ENCODE measurements at regions of chr2 and their contacts with region 1.

Region 1: DNA sequence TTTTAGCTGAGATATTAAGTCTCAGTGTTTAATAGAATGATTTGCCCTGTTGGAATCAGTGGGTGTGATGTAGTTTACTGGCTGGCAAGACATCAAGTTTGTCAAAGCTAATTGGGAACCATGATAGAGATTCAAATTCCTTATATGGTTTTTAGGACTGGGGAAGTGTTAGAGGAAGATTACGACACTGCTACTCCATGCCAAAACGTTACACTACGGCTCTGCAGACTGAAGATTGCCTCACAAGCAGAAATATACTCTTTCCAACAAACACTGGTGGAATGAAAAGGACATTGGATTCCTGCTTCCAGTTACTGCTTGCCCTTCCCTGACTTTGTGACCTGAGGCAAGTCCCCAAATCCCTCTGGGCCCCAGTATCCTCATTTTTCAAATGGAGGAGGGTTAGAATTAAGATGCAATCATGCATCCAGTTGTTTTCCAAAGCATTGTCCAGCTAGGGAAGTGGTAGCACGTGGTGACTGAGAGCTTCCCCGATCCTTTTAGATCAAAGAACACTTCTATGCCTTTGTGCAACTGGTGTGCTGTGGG is 147.6 kb downstream of the CDC42EP3 start:
- DNase-seq: peak in 1 of 2 donors; percentile 72
- ATAC-seq: peak; percentile 93 to 98 (median 97)
- H3K4me3 ChIP-seq: peak overlapping the region in 1 of 10 donors; percentile 4
- H3K27ac ChIP-seq: peak overlapping the region in 9 of 10 donors; percentile 3 to 85 (median 78)
- H3K4me1 ChIP-seq: peaks cover 4 to 39% (median 22%) of the 10 kb centered on the region in 9 donors
- H3K27me3 ChIP-seq: no peaks in the 10 kb centered on the region
- CTCF ChIP-seq: no peak

Region 2: DNA sequence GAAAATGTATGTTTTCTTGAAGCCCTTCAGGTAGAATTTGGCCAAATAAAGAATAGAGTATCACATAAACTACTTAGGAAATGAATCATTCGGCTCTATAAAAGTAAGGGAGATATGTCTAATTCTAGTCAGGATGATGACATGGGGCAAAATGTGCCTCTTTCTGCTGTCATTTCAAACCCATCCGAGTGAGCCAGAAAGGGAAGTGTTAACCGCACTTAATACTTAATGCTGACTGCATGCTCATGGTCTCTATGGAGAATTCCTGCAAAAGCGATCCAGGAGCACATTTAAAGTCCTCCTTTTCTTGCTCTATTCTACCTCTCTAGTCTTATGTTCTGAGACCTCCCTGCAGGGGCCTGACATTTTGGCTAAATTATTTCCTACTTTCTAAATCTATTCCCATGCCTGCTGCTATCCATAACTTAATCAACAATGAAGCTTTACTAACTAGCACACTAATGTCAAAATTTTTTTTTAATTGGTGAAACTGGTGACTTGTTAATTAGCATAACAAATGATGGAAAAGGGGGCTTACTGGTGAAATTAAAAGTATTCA is 20.2 kb after region 1 on chr2:
- intact Hi-C with region 1: no loop called
- DNase-seq: no peak
- ATAC-seq: no peak
- H3K4me3 ChIP-seq: no peak overlapping the region
- H3K27ac ChIP-seq: no peak overlapping the region
- H3K4me1 ChIP-seq: no peaks in the 10 kb centered on the region
- H3K27me3 ChIP-seq: peaks cover 0 to 5% (median 0%) of the 10 kb centered on the region in 7 donors
- CTCF ChIP-seq: no peak

Region 3: GRCh38 chr2:37819186-37819585 is 295.3 kb after region 1 on chr2:
- intact Hi-C with region 1: loop called in 1 of 10 experiments (anchors 10 kb)
- DNase-seq: no peak
- ATAC-seq: no peak
- H3K4me3 ChIP-seq: no peak overlapping the region
- H3K27ac ChIP-seq: no peak overlapping the region
- H3K4me1 ChIP-seq: peaks cover 0 to 26% (median 0%) of the 10 kb centered on the region in 9 donors
- H3K27me3 ChIP-seq: no peaks in the 10 kb centered on the region
- CTCF ChIP-seq: no peak